ENCODE measurements at regions of chr5 and their contacts with region 1.

Region 1: GRCh38 chr5:91419571-91420537 is 36.7 kb upstream of the ARRDC3 start:
- DNase-seq: peak; percentile 65
- H3K4me3 ChIP-seq: no peak overlapping the region
- H3K27ac ChIP-seq: no peak overlapping the region
- H3K4me1 ChIP-seq: no peaks in the 10 kb centered on the region
- CTCF ChIP-seq: peak; percentile 94

Region 2: GRCh38 chr5:90873033-90873517 is 546.8 kb before region 1 on chr5:
- CTCF ChIA-PET with region 1: no interaction called
- POLR2A ChIA-PET with region 1: no interaction called
- intact Hi-C with region 1: loop called (anchors 5 kb)
- DNase-seq: no peak
- H3K4me3 ChIP-seq: no peak overlapping the region
- H3K27ac ChIP-seq: no peak overlapping the region
- H3K4me1 ChIP-seq: no peaks in the 10 kb centered on the region
- CTCF ChIP-seq: no peak

Region 3: GRCh38 chr5:90932052-90932699 is 487.7 kb before region 1 on chr5:
- CTCF ChIA-PET with region 1: no interaction called
- POLR2A ChIA-PET with region 1: no interaction called
- intact Hi-C with region 1: loop called (anchors 10 kb)
- DNase-seq: peak; percentile 22
- H3K4me3 ChIP-seq: no peak overlapping the region
- H3K27ac ChIP-seq: no peak overlapping the region
- H3K4me1 ChIP-seq: no peaks in the 10 kb centered on the region
- CTCF ChIP-seq: peak; percentile 82

Region 4: DNA sequence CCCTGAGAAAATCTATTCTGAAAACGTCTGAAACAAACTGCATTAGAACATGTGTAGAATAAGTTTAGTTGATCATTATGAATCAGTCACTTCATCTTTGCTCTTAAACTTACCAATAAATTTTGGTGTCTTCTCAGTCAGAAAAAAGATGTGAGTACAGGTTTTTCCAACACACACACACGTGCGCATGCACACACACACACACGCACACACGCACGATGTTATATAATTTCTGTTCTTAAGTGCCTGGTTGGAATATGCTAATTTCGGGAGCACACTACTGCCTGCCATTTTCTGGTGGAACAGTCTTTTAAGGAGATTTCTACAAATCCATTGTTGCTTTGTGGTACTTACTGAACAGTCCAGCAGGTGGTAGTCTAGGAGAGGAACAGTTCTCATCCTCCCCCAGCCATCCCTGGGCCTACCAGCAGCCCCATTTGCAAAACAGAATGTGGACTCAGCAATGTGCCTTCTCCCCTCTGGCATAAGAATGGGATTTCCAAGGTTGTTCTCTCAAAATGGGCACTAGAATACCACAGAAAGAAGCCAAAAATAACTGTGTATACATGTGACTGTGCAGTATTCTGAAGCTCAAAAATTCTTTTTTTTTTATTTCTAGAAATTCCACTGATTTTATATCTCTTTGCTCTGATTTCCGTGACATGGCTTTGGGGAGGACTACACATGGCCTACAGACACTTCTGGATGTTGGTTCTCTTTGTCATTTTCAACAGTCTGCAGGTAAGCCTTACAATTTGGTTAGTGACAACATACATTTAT is 318.1 kb before region 1 on chr5:
- CTCF ChIA-PET with region 1: no interaction called
- POLR2A ChIA-PET with region 1: interaction called, 6 read pairs
- intact Hi-C with region 1: loop called (anchors 2 kb)
- DNase-seq: peak; percentile 56
- H3K4me3 ChIP-seq: no peak overlapping the region
- H3K27ac ChIP-seq: no peak overlapping the region
- H3K4me1 ChIP-seq: no peaks in the 10 kb centered on the region
- CTCF ChIP-seq: peak; percentile 77

Region 5: DNA sequence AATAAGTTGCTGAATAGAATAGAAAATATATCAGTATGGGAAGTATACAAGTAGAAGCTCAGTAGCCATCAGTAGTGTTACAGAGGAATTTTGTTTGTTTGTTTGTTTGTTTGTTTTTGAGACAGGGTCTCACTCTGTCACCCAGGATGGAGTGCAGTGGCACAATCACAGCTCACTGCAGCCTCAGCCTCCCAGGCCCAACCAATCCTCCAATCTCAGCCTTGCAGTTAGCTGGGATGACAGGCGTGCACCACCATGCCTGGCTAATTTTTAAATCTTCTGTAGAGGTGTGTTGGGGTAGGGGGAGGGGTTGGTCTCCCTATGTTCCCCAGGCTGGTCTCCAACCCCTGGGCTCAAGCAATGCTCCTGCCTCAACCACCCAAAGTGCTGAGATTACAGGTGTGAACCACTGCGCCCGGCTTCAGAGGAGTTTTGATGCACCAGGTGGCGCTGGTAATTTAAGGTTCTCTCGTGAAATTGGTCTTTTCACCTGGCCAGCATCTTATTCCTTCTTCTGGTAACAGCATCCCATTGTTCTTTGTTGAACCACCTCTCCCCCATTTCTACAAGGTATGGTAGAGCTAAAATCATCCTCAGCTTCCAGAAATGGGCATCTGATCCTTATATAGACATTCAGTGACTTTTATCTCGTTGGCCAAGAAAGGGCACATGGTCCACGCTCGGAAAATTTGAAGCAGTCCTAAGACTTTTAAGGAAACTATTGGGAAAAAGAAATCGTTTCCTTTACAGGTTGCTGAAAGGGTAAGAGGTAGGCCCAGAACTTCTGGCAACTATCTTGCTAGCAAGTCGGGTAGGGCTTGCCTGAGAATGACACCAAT is 193.8 kb before region 1 on chr5:
- CTCF ChIA-PET with region 1: no interaction called
- POLR2A ChIA-PET with region 1: no interaction called
- intact Hi-C with region 1: loop called (anchors 1 kb)
- DNase-seq: peak; percentile 67
- H3K4me3 ChIP-seq: no peak overlapping the region
- H3K27ac ChIP-seq: no peak overlapping the region
- H3K4me1 ChIP-seq: no peaks in the 10 kb centered on the region
- CTCF ChIP-seq: peak; percentile 81

Region 6: DNA sequence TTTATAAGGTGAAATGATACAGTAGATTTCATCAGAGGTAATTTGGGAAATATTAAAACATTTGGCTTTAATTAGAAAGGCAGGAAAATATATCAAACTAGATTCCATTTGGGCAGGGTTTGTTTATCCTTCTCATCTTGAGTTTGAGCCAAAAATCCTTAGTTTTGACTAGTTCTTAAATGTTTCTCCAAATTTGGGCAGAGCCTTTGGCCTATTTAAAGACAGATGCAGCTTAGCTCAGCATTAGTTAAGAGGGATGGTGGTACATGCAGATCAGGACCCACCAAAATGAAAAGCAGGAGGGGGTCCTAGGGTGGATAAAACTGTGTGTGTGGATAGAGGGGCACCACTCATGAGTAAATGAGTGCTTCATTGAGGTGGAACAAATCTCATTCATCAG is 16.4 kb before region 1 on chr5:
- CTCF ChIA-PET with region 1: no interaction called
- POLR2A ChIA-PET with region 1: interaction called, 10 read pairs
- intact Hi-C with region 1: no loop called
- DNase-seq: no peak
- H3K4me3 ChIP-seq: no peak overlapping the region
- H3K27ac ChIP-seq: no peak overlapping the region
- H3K4me1 ChIP-seq: no peaks in the 10 kb centered on the region
- CTCF ChIP-seq: no peak

Region 7: DNA sequence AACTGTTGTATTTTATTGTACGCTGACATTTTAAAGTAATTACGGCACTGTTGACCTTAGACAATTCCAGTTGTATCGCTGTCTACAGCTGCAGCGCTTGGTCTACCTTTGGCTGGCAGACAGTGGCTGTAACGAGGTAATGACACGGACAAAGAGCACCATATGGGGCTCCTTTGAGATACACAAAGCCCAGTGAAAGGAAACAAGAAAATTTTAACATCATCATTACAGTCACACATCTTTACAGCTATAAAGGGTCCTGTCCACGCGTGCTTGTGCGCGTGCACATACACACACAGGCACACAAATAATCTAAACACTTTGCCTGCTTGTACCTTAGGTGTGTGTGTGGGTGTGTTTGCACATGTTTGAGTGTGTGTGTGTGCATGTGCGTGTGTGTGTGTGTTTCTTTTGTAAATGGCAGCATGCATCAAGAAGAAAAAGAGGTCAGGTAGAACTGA is 1215.2 kb after region 1 on chr5:
- CTCF ChIA-PET with region 1: no interaction called
- POLR2A ChIA-PET with region 1: no interaction called
- intact Hi-C with region 1: no loop called
- DNase-seq: no peak
- H3K4me3 ChIP-seq: no peak overlapping the region
- H3K27ac ChIP-seq: no peak overlapping the region
- H3K4me1 ChIP-seq: no peaks in the 10 kb centered on the region
- CTCF ChIP-seq: no peak